ENCODE measurements at regions of chr3 and their contacts with region 1.

Region 1: DNA sequence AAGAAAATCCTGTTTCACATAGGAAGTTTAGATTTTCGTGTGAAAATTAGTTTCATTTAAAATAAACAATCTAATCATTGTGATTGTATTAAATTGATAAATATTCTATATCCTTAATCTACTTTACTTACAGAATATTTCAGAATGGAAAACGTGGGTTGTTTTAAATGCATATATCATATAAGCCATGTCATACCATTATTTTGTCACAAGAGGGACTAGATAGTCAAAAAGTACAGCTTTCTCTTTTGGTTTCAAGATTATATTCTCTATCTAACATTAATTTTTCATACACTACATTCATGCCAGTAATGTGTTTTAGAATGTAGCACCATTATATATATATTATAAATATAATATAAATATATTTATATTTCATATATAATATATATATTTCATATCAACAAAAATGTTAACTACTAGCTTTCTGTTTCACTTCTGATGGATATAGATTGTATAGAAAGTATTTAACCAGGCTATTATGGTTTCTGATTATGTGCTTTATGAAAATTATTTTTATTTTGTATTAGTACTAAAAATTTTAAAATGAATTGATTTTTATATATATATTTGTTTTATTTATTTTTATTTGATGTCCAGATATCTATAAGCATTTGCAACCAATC is 45.3 kb downstream of the OSTN start:
- DNase-seq: no peak

Region 2: DNA sequence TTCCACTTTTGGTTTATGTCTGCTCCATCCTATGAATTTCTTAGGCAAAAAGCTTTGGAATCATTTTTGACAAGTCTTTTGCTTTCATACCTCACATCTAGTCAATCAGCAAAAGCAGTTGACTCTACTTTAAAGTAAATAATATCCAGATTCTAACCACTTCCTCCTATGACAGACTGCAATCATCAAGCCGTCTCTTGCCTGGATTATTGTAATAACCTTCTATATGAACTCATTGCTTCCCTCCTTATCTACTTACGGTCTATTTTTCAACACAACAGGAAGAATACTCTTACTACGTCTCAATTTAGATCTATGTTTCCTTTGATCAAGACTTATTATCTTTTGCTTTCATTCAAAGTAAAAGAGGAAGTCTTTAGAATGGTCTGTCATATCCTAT is 942.8 kb before region 1 on chr3:
- intact Hi-C with region 1: no loop called
- DNase-seq: no peak

Region 3: DNA sequence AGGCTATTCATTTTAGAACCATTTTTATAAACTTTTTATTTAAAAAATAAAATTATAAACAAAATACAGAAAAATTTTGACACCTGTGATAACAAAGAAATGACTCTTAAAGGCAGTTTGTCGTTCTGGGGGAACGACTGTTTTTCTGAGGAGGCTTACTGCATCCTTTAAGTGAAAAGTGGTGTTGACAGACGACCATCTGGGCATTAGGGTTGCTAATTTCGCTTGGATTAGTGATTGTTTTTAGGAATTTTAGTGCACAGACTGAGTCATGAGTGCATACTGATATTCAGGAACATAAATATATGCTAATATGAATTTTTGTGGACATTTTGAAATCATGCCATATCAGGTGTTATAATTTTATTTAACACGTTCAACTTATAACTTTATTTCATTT is 16.8 kb before region 1 on chr3:
- intact Hi-C with region 1: no loop called
- DNase-seq: no peak

Region 4: DNA sequence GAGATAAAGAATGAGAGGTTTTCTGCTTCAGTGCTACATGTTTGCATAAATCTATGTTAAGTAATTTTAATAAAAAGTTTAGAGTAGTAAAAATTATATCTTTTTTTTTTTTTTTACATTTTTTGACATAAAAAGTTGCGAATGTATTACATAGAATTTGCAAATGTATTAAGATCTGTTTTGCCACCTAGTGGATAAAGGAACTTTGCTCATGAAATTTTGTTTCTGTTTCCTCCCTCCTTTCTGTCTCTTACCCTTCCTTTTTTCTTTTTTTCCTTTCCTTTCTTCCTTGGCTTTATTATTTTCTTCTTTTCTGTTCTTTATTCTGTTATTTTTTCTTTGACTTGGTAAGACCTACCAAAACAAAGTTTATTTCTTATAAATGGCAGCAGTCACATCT is 144.5 kb after region 1 on chr3:
- intact Hi-C with region 1: loop called (anchors 10 kb)
- DNase-seq: no peak

Region 5: GRCh38 chr3:191648787-191649186 is 404.4 kb after region 1 on chr3:
- intact Hi-C with region 1: no loop called
- DNase-seq: no peak